Cardiac septum (tissue), 1 donor: ENCODE measurements at regions of chr7 and their contacts with region 1.

Region 1: GRCh38 chr7:14219125-14219524 is 229.7 kb upstream of the ETV1 start:
- DNase-seq: no peak

Region 2: DNA sequence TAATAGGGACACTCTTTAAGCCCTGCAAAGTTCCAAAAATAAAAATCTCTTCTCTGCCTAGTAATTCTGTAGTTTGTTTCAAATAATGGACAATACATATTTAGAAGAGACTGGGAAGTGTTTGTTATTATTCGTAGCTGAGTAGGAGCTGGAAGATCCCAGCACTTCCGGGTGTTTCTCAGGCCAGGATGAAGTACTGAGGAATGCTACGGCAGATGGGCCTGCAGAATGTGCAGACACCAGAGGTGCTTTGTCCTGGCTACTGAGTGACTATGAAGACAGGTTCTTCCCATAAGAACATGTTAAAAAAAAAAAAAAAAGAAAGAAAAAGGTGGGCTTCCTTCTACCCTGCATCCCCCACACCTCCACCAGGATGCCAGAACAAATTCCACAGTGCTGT is 265.8 kb before region 1 on chr7:
- intact Hi-C with region 1: no loop called
- DNase-seq: no peak

Region 3: DNA sequence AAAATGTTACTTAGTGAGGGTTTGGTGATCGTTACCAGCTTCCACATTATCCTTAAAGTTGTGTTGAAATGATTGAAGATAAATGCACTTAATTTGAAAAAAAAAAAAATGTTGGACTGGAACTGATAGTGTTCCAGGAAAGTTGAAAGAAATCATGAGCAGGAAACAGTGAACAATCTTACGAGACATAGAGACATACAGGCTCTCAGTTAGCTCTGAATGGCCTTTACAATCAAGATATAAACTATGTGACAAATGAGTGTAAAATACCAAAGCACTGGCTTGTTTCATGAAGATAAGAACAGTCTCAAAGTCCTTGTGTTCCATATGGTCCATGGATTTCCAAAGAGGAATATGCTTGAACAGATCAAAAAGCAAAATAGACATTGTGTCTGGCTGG is 200.4 kb after region 1 on chr7:
- intact Hi-C with region 1: loop called (anchors 10 kb)
- DNase-seq: no peak